Posterior cingulate gyrus (tissue), 11 donors: ENCODE measurements at regions of chr17 and their contacts with region 1.

Region 1: GRCh38 chr17:82098072-82098821 is at the start of gene FASN:
- DNase-seq: peak; percentile 77 to 99 (median 91)

Region 2: DNA sequence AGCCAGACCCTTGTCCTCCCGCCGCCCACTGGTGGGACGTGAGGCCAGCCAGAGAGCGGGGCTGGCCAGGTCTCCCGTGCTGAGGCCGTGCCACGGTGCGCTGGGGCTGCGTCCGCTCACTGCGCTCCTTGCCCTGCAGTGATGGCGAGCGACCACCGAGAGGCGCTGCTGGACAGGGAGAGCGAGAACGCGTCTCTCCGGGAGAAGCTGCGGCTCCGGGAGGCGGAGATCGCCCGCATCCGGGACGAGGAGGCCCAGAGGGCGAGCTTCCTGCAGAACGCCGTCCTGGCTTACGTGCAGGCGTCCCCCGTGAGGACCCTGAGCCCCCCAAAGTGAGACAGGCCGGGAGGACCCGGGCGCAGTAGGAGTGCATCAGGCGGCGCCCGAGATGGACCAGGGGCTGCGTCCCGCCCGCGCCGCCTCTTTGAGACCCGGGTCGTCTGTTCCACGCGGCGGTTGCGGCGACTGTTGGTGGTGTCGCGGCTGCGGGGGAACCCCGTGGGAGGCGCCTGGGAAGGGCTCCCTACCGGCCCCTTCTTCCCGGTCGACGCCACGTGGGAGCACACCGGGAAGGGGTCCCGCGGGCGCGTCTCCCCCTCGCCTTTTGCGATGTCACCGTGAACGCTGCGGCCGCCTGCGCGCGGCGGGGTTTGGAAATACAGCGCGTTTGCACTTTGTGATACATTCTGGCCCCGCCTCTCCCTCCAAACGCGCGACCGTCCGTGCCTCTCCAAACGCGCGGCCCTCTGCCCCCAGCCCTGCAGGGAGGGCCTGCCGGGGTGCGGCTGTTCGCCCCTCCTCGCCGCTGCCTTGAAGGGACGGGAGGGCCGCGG is 67.6 kb before region 1 on chr17:
- intact Hi-C with region 1: loop called (anchors 5 kb)
- DNase-seq: peak; percentile 80 to 98 (median 86)

Region 3: DNA sequence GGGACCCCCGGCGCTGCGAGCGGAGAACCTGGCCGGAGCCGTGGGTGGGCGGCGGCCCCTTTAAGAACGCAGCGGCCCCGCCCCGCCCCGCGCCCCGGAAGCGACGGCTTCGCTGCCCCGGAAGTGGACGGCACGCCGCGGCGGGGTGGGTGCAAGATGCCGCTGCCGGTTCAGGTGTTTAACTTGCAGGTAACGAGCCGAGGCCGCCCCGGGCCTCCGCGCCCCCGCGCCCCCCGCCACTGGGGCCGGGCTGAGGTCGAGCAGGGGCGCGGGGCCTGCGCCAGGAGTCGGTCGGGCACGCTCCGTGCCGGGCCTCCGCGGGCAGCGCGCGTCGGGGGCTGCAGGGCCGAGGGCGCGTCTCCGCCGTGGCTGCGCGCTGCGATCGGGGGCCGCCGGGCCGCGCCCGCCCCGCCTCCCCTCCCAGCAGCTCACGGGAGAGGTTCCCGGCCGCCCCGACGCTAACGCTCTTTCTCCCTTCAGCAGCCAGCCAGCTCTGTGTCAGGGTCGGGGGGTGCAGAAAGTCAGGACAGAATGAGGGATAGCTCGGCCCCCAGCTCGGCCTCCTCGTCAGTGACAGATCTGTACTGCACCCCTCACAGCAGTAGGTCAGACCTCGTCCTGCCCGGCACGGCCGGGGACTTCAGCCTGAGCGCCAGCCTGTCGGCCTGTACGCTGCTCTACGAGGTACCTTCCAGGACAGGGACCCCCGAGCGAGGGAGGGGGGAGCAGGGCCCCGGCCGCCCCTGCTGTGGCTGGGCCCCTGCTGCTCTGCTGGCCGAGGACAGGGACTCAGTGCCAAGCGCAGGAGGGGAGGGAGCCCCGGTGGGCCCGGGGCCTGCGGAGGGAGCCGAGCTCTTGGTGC is 46.2 kb before region 1 on chr17 and contains the starts of genes GPS1 and RFNG:
- intact Hi-C with region 1: loop called (anchors 5 kb)
- DNase-seq: peak; percentile 74 to 98 (median 84)

Region 4: DNA sequence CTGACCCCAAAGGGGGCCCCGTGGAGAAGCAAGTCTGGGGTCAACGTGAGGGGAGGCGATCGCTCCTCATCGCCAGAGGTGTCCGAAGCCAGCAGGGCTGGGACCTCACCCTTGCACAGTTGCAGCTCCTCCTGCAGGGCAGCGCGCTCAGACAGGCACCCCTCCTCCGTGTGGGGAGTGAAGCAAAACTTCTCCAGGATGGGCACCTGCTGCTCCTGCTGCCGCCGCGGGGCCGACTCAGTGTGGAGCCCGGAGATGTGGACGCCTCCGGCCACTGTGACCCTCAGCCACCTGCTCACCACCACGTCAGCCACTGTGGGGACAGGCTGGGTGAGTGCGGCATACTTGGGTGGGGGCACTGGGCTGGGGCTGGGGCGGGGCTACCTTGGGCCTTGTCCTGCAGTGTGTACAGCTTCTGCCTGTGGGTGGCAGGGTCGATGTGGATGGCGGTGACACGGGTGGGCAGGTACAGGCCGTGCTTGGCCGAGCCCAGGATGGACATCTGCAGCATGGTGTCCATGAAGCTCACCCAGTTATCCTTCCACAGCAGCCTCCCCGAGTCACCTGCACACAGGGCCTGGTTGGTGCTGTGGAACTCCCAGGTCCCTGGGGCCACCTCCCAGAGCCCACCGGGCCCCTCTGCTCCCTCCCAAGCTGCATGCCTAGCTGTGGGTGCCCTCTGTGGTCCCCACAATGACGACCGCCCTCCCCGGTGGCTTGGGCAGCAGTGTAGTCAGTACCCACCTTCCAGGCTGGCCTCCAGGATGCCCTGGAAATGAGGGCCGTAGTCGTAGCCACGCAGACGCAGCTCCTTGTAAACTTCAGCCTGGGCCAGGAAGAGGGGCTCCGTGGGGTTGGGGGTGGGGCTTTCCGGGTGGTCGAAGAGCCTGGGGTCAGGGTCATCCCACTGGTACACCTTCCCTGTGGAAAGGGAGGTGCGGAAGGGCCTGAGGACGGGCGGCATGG is 11.0 kb before region 1 on chr17:
- intact Hi-C with region 1: no loop called
- DNase-seq: no peak

Region 5: GRCh38 chr17:82153745-82154375 is 55.6 kb after region 1 on chr17:
- intact Hi-C with region 1: loop called (anchors 5 kb)
- DNase-seq: peak; percentile 51 to 97 (median 78)